ENCODE measurements at regions of chr17 and their contacts with region 1.

Region 1: DNA sequence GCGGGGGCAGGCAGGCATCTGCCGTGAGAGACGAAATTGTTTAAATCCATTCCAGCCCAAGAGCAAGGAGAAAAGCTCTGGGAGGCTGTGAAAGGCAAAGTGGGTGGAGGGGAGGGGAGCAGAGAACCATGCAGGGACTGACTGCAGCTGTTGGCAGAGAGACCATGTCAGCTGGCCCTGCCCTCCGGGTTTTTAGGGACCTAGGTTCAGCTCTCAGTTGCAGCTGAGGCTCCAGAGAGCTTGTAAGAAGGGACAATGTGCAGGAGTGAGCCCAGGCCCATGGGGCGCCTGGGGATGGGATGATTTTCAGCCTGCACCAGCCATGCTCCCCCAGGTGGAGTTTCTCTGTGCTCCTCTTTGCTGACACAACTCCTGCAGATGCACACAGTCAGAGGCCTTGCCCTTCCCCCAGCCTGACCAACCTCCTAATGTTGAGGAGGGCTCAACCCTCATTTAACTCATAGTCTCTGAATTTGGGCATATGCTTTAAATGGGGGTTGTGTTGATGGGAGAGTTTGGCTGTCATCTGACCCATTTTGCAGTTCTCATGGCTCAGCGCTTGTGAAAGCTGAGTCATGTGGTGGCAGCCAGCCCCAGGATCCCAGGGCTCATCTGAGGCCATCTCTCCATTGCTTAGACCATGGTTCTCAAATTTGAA is 70.9 kb downstream of the PLXDC1 start:
- DNase-seq: no peak

Region 2: DNA sequence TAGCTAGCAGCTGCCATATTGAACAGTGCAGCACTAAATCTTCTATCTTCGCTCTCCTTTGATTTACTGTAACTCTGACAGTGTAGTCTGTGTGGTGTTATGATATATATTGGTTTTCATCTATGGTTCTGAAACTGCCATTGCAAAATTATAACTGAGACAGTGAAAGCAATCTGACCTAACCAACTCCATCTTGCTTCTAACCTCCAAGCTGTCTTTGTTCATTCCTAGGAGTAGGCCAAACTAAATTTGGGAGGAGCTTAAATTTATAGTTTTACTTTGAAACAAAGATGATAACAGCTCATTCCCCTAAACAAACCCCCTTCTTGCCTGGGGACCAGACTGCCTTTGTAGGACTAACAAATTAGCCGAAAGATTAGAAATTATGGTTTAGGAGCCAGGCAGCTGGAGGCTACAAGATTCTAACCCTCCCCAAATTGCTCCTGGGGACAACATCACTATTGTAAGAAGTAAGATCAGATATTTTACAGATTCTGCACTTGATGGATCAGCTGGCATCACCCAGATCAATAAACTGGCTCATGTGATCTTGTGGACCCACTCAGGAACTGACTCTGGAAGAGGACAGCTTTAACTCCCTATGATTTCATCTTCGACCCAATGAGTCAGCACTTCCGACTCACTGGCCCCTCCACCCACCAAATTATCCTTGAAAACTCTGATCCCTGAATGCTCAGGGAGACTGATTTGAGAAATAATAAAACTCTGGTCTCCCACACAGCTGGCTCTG is 66.3 kb before region 1 on chr17:
- intact Hi-C with region 1: no loop called
- DNase-seq: no peak

Region 3: DNA sequence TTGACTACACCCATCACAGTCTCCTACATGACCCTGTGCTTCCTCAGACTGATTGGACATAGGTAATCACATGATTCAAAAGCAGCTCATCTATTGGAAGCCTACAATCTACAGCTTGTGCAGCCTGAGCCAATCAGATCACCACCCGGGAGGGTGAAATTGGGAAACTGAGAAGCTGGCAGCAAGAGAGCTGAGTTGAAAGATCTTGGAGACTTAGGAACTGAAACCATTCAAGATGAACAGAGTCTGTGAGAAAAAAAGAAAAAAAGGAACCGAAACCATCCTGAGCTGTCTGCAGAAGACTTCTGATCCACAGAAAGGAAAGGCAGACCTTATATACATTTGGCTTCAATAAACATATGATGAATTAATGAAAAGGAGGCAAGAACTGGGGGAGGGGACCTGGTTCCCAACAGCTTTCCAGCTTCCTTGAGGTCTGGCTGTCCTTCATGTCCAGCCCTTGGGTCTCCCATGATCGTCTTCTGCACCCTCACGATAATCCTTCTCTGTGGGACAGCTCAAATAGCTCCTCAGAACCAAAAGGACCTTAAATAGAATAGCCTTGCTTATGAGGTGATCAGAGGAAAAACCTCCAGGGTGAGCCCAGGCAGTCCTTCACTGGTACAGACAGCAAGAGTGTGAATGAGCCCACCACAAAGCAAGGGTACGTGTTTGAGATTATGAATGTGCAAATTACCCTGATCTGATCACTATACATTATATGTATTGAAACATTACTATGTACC is 38.3 kb after region 1 on chr17:
- intact Hi-C with region 1: no loop called
- DNase-seq: no peak

Region 4: GRCh38 chr17:39139137-39139516 is 58.6 kb after region 1 on chr17:
- intact Hi-C with region 1: loop called (anchors 5 kb)
- DNase-seq: no peak